PC-9 (cell line): ENCODE measurements at regions of chr17 and their contacts with region 1.

Region 1: DNA sequence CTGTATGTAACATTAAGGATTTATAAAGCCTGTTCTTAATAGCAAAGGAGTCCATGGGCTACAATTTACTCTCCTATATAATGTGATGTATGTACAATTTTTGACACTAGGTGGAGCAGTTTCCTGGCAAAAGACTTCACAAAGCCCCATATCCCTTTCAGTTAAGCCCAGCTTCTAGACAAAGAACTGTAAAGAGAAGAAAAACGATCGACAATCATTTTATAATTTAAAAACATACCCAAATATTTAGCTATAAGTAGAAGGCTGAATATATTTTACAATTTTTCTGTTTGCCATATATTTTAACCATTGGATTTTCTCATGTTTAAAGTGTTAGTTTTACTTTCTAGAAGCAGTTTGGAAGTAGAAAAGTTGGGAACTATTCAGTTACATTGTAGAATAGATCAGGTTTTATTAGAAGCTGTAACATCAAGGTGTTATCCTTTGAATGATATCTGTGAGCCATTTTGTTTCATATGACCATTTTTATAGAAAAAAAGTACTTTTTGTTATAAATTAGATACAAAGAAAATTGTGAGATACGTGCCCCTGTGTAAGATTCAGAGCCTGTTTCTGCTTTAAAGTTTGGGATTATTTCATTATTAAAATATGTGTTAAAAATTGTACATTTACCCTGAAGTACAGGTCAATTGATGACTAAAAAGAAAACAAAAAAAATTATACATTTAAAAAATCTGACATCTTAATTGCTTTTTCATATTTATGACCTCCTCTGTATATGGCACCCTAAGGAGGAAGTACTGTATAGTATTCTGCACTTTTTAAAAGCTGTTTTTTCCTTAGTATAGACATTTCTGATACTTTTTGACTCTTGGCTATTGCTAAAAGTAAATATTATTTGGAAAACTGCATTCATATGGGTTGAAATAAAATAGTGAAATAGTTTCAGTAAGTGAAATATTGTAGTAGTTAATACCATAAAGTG is 46.3 kb downstream of the VMP1 start:
- DNase-seq: peak in 1 of 2 experiments; percentile 79
- H3K4me3 ChIP-seq: peak overlapping the region; percentile 45
- H3K27ac ChIP-seq: peak overlapping the region; percentile 99
- H3K4me1 ChIP-seq: peaks cover 59% of the 10 kb centered on the region
- H3K27me3 ChIP-seq: no peaks in the 10 kb centered on the region
- CTCF ChIP-seq: peak; percentile 93

Region 2: DNA sequence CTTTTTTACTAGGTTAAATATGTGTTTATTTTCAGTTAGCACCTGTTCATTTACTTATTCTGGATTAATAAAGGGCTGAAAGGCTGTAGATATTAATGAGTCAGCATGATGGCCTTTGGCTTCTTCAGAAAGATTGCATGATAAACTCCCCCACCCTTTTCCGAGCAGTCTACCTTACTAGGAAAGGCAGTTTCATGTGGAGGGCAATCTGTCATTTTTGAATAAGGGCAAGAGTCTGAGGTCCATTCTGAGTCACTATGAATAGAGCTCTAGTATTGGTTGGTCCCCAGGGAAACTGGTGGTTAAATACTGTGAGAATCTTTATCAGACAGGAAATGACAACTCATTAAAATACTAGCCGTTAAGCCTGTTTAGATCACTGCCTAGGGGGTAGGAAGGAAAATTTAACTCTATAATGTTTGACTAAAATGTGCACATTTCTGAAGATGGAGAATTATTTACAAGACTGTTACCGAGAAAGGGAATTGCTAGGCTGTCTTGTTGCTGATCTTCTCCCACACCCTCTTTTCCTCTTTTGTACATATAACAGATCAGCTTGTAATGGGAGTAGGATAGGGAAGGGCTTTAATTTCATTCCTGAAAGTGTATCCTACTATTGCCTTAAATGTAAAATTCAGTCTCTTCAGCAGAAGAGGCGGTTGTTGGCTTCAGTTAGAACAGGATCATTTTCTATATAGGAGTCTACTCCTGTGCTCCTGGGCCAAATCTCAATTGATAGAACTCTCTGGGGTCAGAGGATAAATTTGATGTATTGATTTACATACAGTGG is 75.6 kb after region 1 on chr17:
- CTCF ChIA-PET with region 1: interaction called, 3 read pairs
- POLR2A ChIA-PET with region 1: interaction called, 24 read pairs
- intact Hi-C with region 1: loop called (anchors 1 kb)
- DNase-seq: peak; percentile 66 to 100
- H3K4me3 ChIP-seq: peak overlapping the region; percentile 51
- H3K27ac ChIP-seq: peak overlapping the region; percentile 99
- H3K4me1 ChIP-seq: peaks cover 90% of the 10 kb centered on the region
- H3K27me3 ChIP-seq: no peaks in the 10 kb centered on the region
- CTCF ChIP-seq: no peak

Region 3: DNA sequence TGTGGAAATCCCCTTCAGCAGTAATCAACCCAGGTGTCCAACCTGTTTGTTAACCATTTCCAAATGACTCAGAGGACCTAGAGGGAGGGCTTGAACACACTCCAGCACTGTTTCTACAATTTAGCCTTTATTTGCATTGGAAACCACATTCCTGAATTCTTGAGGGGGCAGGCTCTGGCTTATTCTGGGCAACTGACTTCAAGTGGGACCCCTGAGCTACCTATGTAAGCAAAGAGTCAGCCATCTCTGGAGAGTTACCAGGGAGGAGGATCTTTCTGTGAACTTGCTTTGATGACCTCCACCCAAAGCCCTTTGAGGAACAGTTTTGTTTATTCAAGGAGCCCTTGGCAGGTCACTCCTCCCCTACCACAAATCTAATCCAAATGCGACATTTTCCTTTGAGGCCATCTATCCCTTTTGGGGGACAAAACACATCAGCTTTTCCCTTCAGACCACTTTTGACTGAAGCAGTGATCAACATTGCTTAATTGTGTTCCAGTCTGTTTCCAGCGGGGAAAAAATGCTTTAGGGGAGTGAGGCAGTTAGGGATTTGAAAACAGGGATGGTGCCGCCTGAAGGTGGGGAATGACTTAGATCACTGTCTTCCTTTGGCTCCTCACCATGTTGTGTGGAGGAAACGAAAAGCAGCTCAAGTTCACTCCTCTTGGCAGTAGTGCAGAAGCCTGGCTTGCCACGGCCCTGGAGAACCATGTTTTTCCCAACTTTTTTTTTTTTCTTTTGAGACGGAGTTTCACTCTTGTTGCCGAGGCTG is 92.8 kb after region 1 on chr17:
- CTCF ChIA-PET with region 1: no interaction called
- POLR2A ChIA-PET with region 1: interaction called, 37 read pairs
- intact Hi-C with region 1: loop called (anchors 1 kb)
- DNase-seq: peak; percentile 75 to 100
- H3K4me3 ChIP-seq: peak overlapping the region; percentile 46; the same call in 1 of the 2 replicates
- H3K27ac ChIP-seq: peak overlapping the region; percentile 99
- H3K4me1 ChIP-seq: peaks cover 76% of the 10 kb centered on the region
- H3K27me3 ChIP-seq: no peaks in the 10 kb centered on the region
- CTCF ChIP-seq: no peak

Region 4: GRCh38 chr17:59859444-59860025 is 105.7 kb after region 1 on chr17:
- CTCF ChIA-PET with region 1: interaction called, 28 read pairs
- POLR2A ChIA-PET with region 1: interaction called, 12 read pairs
- intact Hi-C with region 1: loop called (anchors 1 kb)
- DNase-seq: no peak
- H3K4me3 ChIP-seq: no peak overlapping the region
- H3K27ac ChIP-seq: peak overlapping the region; percentile 98
- H3K4me1 ChIP-seq: peaks cover 48% of the 10 kb centered on the region
- H3K27me3 ChIP-seq: no peaks in the 10 kb centered on the region
- CTCF ChIP-seq: peak; percentile 90